Dorsolateral prefrontal cortex (tissue), 120 donors: ENCODE measurements at regions of chr7 and their contacts with region 1.

Region 1: DNA sequence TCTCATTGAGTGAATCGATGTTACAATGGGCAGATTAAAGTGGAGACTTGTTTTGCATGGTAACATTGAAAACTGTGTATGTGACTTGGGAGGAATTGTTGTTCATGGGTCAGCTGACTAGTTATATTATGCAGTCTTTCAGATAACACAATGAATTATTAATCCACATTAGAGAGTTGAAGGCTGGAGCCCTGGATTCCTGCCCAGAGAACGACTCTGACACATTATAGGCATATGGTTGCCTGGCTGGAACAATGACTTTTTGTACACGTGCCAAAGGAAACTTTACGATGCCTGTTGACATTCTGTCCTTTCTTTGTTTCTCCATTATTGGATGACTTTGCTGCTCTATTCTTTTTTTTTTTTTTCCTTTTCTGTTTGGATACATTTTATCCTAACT is 52.3 kb upstream of the TMEM229A start:
- DNase-seq: peak; percentile 35 to 95 (median 71)
- H3K4me3 ChIP-seq: peak overlapping the region in 23 of 59 donors; percentile 0 to 39 (median 15)
- H3K27ac ChIP-seq: peak overlapping the region in 57 of 59 donors; percentile 3 to 92 (median 78)
- H3K27me3 ChIP-seq: no peaks in the 10 kb centered on the region
- CTCF ChIP-seq: peak in 3 of 56 donors; percentile 6 to 20 (median 9)

Region 2: GRCh38 chr7:123797673-123798527 is 287.3 kb before region 1 on chr7:
- intact Hi-C with region 1: no loop called
- DNase-seq: no peak
- H3K4me3 ChIP-seq: no peak overlapping the region
- H3K27ac ChIP-seq: no peak overlapping the region
- H3K27me3 ChIP-seq: no peaks in the 10 kb centered on the region
- CTCF ChIP-seq: peak; percentile 54 to 87 (median 70)

Region 3: DNA sequence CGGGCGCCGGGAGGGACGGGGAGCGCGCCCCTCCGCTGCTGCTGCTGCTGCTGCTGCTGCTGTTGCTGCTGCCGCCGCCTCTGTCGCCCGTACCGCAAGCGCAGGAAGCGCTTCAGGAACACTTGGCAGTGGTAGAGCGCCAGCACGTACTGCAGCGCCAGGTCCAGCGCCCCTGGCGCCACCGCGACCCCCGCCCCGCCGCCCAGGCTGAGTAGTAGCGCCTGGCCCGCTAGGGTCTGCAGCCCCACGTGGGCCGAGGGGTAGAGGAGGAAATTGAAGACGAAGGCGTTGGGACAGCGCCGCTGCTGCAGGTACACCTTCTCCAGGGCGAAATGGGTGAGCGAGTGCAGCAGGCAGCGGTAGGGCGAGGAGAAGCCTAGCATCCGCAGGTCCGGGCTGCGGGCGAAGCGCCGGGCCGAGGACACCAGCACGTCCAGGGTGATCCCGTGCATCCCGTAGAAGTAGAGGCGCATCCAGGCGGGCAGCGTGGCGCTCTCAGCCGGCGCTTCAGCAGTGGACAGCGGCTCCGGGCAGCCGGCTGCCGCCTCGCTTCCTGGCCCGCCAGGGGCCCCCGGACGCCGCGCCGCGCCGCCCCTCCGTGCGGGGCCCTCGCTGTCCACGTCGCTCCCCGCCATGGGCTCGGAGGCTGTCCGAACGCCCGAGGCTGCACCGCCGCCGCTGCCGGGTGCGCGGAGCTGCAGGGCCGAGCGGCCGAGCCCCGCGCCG is 52.6 kb before region 1 on chr7 and contains the start of gene TMEM229A:
- intact Hi-C with region 1: loop called (anchors 1 to 2 kb)
- DNase-seq: peak; percentile 37 to 75 (median 60)
- H3K4me3 ChIP-seq: peak within 1 kb of the TSS; percentile 61 to 93 (median 84)
- H3K27ac ChIP-seq: peak within 1 kb of the TSS; percentile 92 to 100 (median 98)
- H3K27me3 ChIP-seq: no peaks in the 10 kb centered on the region
- CTCF ChIP-seq: peak in 28 of 56 donors; percentile 3 to 52 (median 23)
- total RNA-seq, gene TMEM229A: 4.5 to 16.4 (median 9.0) TPM

Region 4: DNA sequence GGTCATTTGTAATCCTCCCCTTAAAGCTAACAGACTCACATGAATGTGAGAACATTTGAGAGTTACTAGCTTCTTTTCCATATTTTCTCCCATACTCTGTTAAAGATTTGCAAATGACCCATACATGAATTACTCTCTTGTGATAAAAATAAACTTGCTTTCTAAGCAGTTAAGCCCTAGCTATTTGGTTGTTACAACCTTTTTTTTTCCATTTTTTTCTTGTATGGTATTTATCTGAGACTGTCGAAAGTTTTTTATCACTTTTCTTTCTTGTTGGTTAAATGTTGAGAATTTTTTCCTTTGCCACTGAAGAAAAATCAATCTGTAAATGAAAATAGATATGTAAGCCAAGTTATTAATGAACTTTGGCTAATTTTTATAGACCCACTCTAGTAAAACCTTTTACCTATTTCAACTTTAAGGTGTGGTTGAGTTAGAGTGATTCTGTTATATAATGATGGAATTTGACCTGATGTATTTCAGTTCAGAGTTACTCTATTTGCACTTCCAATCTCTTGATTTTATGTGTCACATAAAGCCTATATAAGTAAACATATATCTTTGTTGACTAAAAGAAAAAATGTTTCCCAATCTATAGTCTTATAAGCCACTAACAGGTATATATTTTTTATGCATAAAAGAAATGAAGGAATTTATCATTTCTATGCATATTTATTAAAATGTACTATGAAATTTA is 33.4 kb before region 1 on chr7:
- intact Hi-C with region 1: no loop called
- DNase-seq: no peak
- H3K4me3 ChIP-seq: no peak overlapping the region
- H3K27ac ChIP-seq: no peak overlapping the region
- H3K27me3 ChIP-seq: no peaks in the 10 kb centered on the region
- CTCF ChIP-seq: no peak